Caco-2 (cell line): ENCODE measurements at regions of chr9 and their contacts with region 1.

Region 1: GRCh38 chr9:96854073-96854876 is at the start of gene ZNF782:
- DNase-seq: peak; percentile 93 to 95
- H3K4me3 ChIP-seq: peak within 1 kb of the TSS; percentile 72
- H3K4me3 Mint-ChIP-seq: peak within 1 kb of the TSS; percentile 98
- H3K27ac Mint-ChIP-seq: peak within 1 kb of the TSS; percentile 98
- H3K4me1 ChIP-seq: peaks cover 34% of the 10 kb centered on the region
- H3K4me1 Mint-ChIP-seq: peaks cover 34% of the 10 kb centered on the region
- H3K27me3 ChIP-seq: no peaks in the 10 kb centered on the region
- H3K27me3 Mint-ChIP-seq: no peaks in the 10 kb centered on the region
- CTCF ChIP-seq: no peak
- total RNA-seq, gene ZNF782: 8.1 and 10.3 TPM in 2 replicates

Region 2: GRCh38 chr9:96344458-96345180 is 509.7 kb before region 1 on chr9:
- CTCF ChIA-PET with region 1: no interaction called
- POLR2A ChIA-PET with region 1: interaction called, 11 read pairs
- intact Hi-C with region 1: no loop called
- DNase-seq: peak; percentile 74 to 91
- H3K4me3 ChIP-seq: no peak overlapping the region
- H3K4me3 Mint-ChIP-seq: no peak overlapping the region
- H3K27ac Mint-ChIP-seq: no peak overlapping the region
- H3K4me1 ChIP-seq: peaks cover 48% of the 10 kb centered on the region
- H3K4me1 Mint-ChIP-seq: peaks cover 7% of the 10 kb centered on the region
- H3K27me3 ChIP-seq: no peaks in the 10 kb centered on the region
- H3K27me3 Mint-ChIP-seq: no peaks in the 10 kb centered on the region
- CTCF ChIP-seq: no peak

Region 3: DNA sequence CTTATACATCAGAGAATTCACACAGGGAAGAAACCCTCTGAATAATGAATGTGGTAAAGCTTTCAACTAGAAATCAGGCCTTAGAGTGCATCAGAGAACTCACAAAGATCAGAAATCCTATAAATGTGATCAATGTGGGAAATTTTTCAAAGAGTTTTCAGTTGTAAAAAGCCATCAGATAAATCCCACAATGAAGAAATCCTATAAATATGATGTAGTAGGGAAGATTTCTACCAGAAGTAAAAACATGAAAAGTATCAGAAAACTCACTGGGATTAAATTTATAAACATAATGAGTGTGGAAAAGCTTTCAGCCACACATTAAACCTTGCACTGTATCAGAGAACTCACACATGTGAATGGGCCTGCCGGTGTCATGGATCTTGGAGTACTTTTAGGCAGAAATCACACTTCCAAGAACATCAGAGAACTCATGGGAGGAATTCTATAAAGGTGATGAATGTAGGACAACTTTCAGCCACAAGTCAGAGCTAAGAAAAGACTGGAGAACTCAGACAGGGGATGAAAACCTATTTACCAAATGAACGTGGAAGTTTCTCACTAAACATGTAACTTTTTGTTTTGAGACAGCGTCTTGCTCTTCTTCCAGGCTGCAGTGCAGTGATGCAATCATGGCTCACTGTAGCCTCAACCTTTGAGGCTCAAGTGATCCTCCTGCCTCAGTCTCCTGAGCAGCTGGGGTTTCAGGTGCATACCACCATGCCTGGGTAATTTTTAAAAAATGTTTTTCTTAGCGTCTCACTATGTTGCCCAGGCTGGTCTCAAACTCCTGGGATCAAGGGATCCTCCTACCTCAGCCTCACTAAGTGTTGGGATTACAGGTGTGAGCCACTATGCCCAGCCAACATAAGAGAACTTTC is 115.9 kb before region 1 on chr9:
- CTCF ChIA-PET with region 1: no interaction called
- POLR2A ChIA-PET with region 1: no interaction called
- intact Hi-C with region 1: no loop called
- DNase-seq: no peak
- H3K4me3 ChIP-seq: no peak overlapping the region
- H3K4me3 Mint-ChIP-seq: no peak overlapping the region
- H3K27ac Mint-ChIP-seq: no peak overlapping the region
- H3K4me1 ChIP-seq: no peaks in the 10 kb centered on the region
- H3K4me1 Mint-ChIP-seq: no peaks in the 10 kb centered on the region
- H3K27me3 ChIP-seq: no peaks in the 10 kb centered on the region
- H3K27me3 Mint-ChIP-seq: no peaks in the 10 kb centered on the region
- CTCF ChIP-seq: no peak

Region 4: DNA sequence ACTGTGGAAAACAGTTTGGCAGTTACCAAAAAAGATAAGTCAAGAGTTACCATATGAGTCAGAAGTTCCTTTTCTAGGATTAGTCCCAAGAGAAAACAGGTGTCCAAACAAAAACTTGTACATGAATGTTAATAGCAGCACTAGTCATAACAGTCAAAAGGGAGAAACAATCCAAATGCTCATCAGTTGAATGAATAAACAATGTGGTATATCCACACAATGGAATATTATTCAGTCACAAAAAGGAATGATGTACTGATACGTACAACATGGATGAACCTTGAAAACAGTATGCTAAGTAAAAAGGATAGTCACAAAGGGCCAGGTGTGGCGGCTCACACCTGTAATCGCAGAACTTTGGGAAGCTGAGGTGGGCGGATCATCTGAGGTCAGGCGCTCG is 84.3 kb before region 1 on chr9:
- CTCF ChIA-PET with region 1: no interaction called
- POLR2A ChIA-PET with region 1: no interaction called
- intact Hi-C with region 1: no loop called
- DNase-seq: no peak
- H3K4me3 ChIP-seq: no peak overlapping the region
- H3K4me3 Mint-ChIP-seq: no peak overlapping the region
- H3K27ac Mint-ChIP-seq: no peak overlapping the region
- H3K4me1 ChIP-seq: no peaks in the 10 kb centered on the region
- H3K4me1 Mint-ChIP-seq: no peaks in the 10 kb centered on the region
- H3K27me3 ChIP-seq: no peaks in the 10 kb centered on the region
- H3K27me3 Mint-ChIP-seq: no peaks in the 10 kb centered on the region
- CTCF ChIP-seq: no peak

Region 5: DNA sequence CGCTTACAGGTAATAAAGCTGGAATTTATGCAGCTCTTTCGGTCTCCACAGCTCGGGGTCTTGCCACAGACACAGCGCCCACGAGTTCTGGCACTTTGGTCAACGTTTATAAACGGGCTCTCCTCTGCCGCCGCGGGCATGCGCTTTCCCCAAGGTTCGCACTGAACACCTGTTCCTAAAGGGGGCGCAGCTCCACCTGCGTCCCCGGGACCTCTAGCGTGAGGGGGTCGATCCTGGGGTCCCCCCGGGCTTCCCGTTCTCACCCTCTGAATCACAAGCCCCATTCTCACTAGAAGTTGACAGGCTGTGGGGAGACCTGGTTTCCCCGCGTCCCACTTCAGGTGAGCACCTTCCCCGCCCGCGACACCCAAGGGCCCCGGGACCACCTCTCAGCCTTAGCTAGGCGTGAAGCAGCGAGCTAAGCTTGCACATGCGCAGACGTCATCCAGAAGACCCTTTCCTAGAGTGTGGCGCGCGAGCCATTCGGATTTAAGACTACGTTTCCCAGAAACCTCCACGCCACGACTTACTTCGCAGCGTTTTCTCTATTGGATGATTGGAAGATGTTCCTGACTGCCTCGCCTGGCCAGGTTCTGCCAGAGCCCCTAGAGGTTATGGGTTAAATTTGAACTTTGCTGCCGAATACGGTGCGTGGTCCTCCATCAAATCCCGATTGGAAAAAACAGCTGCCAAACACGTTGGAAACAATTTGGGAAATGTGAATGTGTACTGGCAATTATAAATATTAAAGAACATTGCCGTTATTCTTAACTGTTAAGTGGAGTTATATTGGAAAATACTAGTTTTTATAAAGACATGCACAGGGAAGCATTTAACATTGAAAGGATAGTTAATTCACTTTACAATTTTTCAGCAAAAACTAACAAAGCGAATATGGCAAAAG is 21.4 kb after region 1 on chr9:
- CTCF ChIA-PET with region 1: interaction called, 42 read pairs
- POLR2A ChIA-PET with region 1: interaction called, 9 read pairs
- intact Hi-C with region 1: loop called (anchors 1 kb)
- DNase-seq: peak; percentile 93 to 96
- H3K4me3 ChIP-seq: peak overlapping the region; percentile 52
- H3K4me3 Mint-ChIP-seq: peak overlapping the region; percentile 99
- H3K27ac Mint-ChIP-seq: peak overlapping the region; percentile 90
- H3K4me1 ChIP-seq: 0 out of 2 replicates have a peak, but pooled peaks cover 4% of the 10 kb centered on the region
- H3K4me1 Mint-ChIP-seq: peaks cover 7% of the 10 kb centered on the region
- H3K27me3 ChIP-seq: no peaks in the 10 kb centered on the region
- H3K27me3 Mint-ChIP-seq: no peaks in the 10 kb centered on the region
- CTCF ChIP-seq: peak; percentile 62 to 72

Region 6: GRCh38 chr9:97237951-97238851 is 383.9 kb after region 1 on chr9:
- CTCF ChIA-PET with region 1: no interaction called
- POLR2A ChIA-PET with region 1: no interaction called
- intact Hi-C with region 1: loop called (anchors 2 kb)
- DNase-seq: peak; percentile 86 to 90
- H3K4me3 ChIP-seq: peak overlapping the region; percentile 56
- H3K4me3 Mint-ChIP-seq: peak overlapping the region; percentile 96
- H3K27ac Mint-ChIP-seq: peak overlapping the region; percentile 93
- H3K4me1 ChIP-seq: peaks cover 35% of the 10 kb centered on the region
- H3K4me1 Mint-ChIP-seq: peaks cover 23% of the 10 kb centered on the region
- H3K27me3 ChIP-seq: no peaks in the 10 kb centered on the region
- H3K27me3 Mint-ChIP-seq: no peaks in the 10 kb centered on the region
- CTCF ChIP-seq: no peak

Region 7: GRCh38 chr9:97501177-97501971 is 647.1 kb after region 1 on chr9 and contains the start of gene TMOD1:
- CTCF ChIA-PET with region 1: interaction called, 11 read pairs
- POLR2A ChIA-PET with region 1: no interaction called
- intact Hi-C with region 1: no loop called
- DNase-seq: peak; percentile 61 to 83
- H3K4me3 ChIP-seq: peak within 1 kb of the TSS; percentile 61
- H3K4me3 Mint-ChIP-seq: peak within 1 kb of the TSS; percentile 73
- H3K27ac Mint-ChIP-seq: no peak within 1 kb of the TSS
- H3K4me1 ChIP-seq: no peaks in the 10 kb centered on the region; the same call in 1 of the 2 replicates
- H3K4me1 Mint-ChIP-seq: no peaks in the 10 kb centered on the region
- H3K27me3 ChIP-seq: peaks cover 5% of the 10 kb centered on the region; the same call in 1 of the 2 replicates
- H3K27me3 Mint-ChIP-seq: peaks cover 19% of the 10 kb centered on the region
- CTCF ChIP-seq: peak in 1 of 2 experiments; percentile 30
- total RNA-seq, gene TMOD1: 1.00 and 1.1 TPM in 2 replicates

Region 8: GRCh38 chr9:97615439-97616072 is 761.3 kb after region 1 on chr9:
- CTCF ChIA-PET with region 1: interaction called, 5 read pairs
- POLR2A ChIA-PET with region 1: no interaction called
- intact Hi-C with region 1: loop called (anchors 5 kb)
- DNase-seq: peak; percentile 57 to 68
- H3K4me3 ChIP-seq: no peak overlapping the region
- H3K4me3 Mint-ChIP-seq: no peak overlapping the region
- H3K27ac Mint-ChIP-seq: no peak overlapping the region
- H3K4me1 ChIP-seq: no peaks in the 10 kb centered on the region
- H3K4me1 Mint-ChIP-seq: no peaks in the 10 kb centered on the region
- H3K27me3 ChIP-seq: no peaks in the 10 kb centered on the region
- H3K27me3 Mint-ChIP-seq: no peaks in the 10 kb centered on the region
- CTCF ChIP-seq: peak; percentile 74 to 79